ENCODE measurements at regions of chr4 and their contacts with region 1.

Region 1: DNA sequence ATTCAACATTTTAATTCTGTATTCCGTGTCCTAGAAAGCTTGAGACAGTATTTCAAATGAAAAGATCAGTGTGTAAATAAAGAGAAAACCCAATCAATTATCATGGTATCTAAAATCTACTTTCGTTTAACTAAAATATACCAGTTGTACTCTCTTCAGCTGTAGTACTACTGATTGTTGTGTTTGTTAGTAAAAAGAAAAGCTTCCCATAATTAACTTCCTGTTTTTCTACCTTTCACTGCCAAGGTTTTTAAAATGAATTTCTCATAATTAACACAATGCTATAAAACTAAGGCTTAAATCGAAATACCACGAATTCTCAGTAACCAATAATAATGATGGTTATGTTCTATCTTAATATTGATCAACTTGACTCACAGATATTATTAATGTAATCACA is 37.4 kb downstream of the PPP3CA start:
- DNase-seq: no peak
- ATAC-seq: no peak
- H3K4me3 ChIP-seq: no peak overlapping the region
- H3K4me3 Mint-ChIP-seq: no peak overlapping the region
- H3K27ac ChIP-seq: no peak overlapping the region
- H3K27ac Mint-ChIP-seq: no peak overlapping the region
- H3K4me1 ChIP-seq: peaks cover 4% of the 10 kb centered on the region
- H3K4me1 Mint-ChIP-seq: peaks cover 69% of the 10 kb centered on the region
- H3K27me3 ChIP-seq: no peaks in the 10 kb centered on the region
- H3K27me3 Mint-ChIP-seq: no peaks in the 10 kb centered on the region
- CTCF ChIP-seq: no peak

Region 2: DNA sequence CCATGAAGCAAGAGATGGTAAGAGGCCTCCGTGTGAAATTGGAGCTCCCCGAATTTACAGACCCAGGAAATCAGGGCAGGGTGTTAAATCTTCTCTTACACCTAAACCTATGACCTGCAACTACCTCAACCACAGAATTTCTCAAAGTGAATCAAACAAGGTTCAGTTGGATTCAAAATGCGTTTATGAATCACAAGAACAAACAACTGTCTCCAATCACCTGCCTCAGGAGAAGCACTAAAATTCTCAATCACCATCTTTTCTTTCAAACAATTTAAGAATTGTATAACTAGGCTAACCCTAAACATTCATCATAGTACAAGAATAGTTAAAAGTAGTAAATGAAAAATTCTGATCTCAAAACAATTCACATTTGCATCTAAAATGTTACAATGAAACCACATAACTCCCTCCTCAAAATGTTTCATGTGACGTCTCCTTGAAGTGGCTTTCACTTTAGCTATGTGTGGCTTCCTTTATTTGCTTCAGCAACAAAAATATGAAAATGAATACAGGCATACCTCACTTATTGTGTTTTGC is 18.2 kb after region 1 on chr4:
- CTCF ChIA-PET with region 1: interaction called, 3 read pairs
- POLR2A ChIA-PET with region 1: interaction called, 10 read pairs
- intact Hi-C with region 1: no loop called
- DNase-seq: peak in 4 of 14 experiments; percentile 24 to 80 (median 72)
- ATAC-seq: peak; percentile 87
- H3K4me3 ChIP-seq: peak overlapping the region; percentile 15
- H3K4me3 Mint-ChIP-seq: peak overlapping the region; percentile 23
- H3K27ac ChIP-seq: peak overlapping the region in 1 of 2 donors; percentile 18
- H3K27ac Mint-ChIP-seq: peak overlapping the region; percentile 76
- H3K4me1 ChIP-seq: peaks cover 19% of the 10 kb centered on the region
- H3K4me1 Mint-ChIP-seq: peaks cover 69% of the 10 kb centered on the region
- H3K27me3 ChIP-seq: no peaks in the 10 kb centered on the region
- H3K27me3 Mint-ChIP-seq: peaks cover 10% of the 10 kb centered on the region
- CTCF ChIP-seq: no peak

Measured in CD4-positive, alpha-beta T cell (primary cell).